ENCODE measurements at regions of chr2 and their contacts with region 1.

Region 1: GRCh38 chr2:109173311-109174171 is 44.5 kb downstream of the SH3RF3 start:
- DNase-seq: peak; percentile 83
- H3K4me3 Mint-ChIP-seq: peak overlapping the region; percentile 18
- H3K27ac Mint-ChIP-seq: peak overlapping the region; percentile 55
- H3K4me1 Mint-ChIP-seq: peaks cover 63% of the 10 kb centered on the region
- H3K27me3 Mint-ChIP-seq: no peaks in the 10 kb centered on the region
- CTCF ChIP-seq: no peak

Region 2: GRCh38 chr2:109185821-109186570 is 12.5 kb after region 1 on chr2:
- CTCF ChIA-PET with region 1: interaction called, 5 read pairs
- POLR2A ChIA-PET with region 1: interaction called, 12 read pairs
- intact Hi-C with region 1: no loop called
- DNase-seq: peak; percentile 57
- H3K4me3 Mint-ChIP-seq: peak overlapping the region; percentile 33
- H3K27ac Mint-ChIP-seq: peak overlapping the region; percentile 83
- H3K4me1 Mint-ChIP-seq: peaks cover 39% of the 10 kb centered on the region
- H3K27me3 Mint-ChIP-seq: no peaks in the 10 kb centered on the region
- CTCF ChIP-seq: no peak

Region 3: GRCh38 chr2:109213646-109214417 is 40.3 kb after region 1 on chr2:
- CTCF ChIA-PET with region 1: no interaction called
- POLR2A ChIA-PET with region 1: interaction called, 18 read pairs
- intact Hi-C with region 1: loop called (anchors 5 kb)
- DNase-seq: peak; percentile 97
- H3K4me3 Mint-ChIP-seq: peak overlapping the region; percentile 48
- H3K27ac Mint-ChIP-seq: peak overlapping the region; percentile 90
- H3K4me1 Mint-ChIP-seq: peaks cover 78% of the 10 kb centered on the region
- H3K27me3 Mint-ChIP-seq: no peaks in the 10 kb centered on the region
- CTCF ChIP-seq: no peak

Region 4: GRCh38 chr2:109238580-109238979 is 65.0 kb after region 1 on chr2:
- CTCF ChIA-PET with region 1: interaction called, 8 read pairs
- POLR2A ChIA-PET with region 1: interaction called, 22 read pairs
- intact Hi-C with region 1: loop called (anchors 5 kb)
- DNase-seq: peak; percentile 97
- H3K4me3 Mint-ChIP-seq: peak overlapping the region; percentile 16
- H3K27ac Mint-ChIP-seq: peak overlapping the region; percentile 70
- H3K4me1 Mint-ChIP-seq: peaks cover 57% of the 10 kb centered on the region
- H3K27me3 Mint-ChIP-seq: no peaks in the 10 kb centered on the region
- CTCF ChIP-seq: no peak